ENCODE measurements at regions of chr9 and their contacts with region 1.

Region 1: GRCh38 chr9:37474438-37474837 is 9.2 kb upstream of the ZBTB5 start:
- DNase-seq: no peak
- ATAC-seq: no peak
- H3K4me3 Mint-ChIP-seq: no peak overlapping the region
- H3K27ac Mint-ChIP-seq: no peak overlapping the region
- H3K4me1 Mint-ChIP-seq: peaks cover 23% of the 10 kb centered on the region
- H3K27me3 Mint-ChIP-seq: no peaks in the 10 kb centered on the region
- CTCF ChIP-seq: no peak

Region 2: GRCh38 chr9:37449862-37450632 is 24.4 kb before region 1 on chr9:
- CTCF ChIA-PET with region 1: no interaction called
- POLR2A ChIA-PET with region 1: no interaction called
- intact Hi-C with region 1: loop called (anchors 2 kb)
- DNase-seq: no peak
- ATAC-seq: no peak
- H3K4me3 Mint-ChIP-seq: no peak overlapping the region
- H3K27ac Mint-ChIP-seq: no peak overlapping the region
- H3K4me1 Mint-ChIP-seq: peaks cover 40% of the 10 kb centered on the region
- H3K27me3 Mint-ChIP-seq: no peaks in the 10 kb centered on the region
- CTCF ChIP-seq: no peak